ENCODE measurements at regions of chr12 and their contacts with region 1.

Region 1: GRCh38 chr12:62785941-62786559 is 148.9 kb downstream of the PPM1H start:
- DNase-seq: peak; percentile 94
- H3K4me3 ChIP-seq: no peak overlapping the region
- H3K27ac ChIP-seq: peak overlapping the region; percentile 50
- H3K4me1 ChIP-seq: peaks cover 21% of the 10 kb centered on the region
- H3K27me3 ChIP-seq: no peaks in the 10 kb centered on the region
- CTCF ChIP-seq: no peak

Region 2: GRCh38 chr12:62631471-62632410 is 154.3 kb before region 1 on chr12:
- CTCF ChIA-PET with region 1: no interaction called
- dilution Hi-C with region 1: no loop called
- in situ Hi-C with region 1: no loop called
- intact Hi-C with region 1: loop called (anchors 2 kb)
- DNase-seq: peak; percentile 44
- H3K4me3 ChIP-seq: peak overlapping the region; percentile 14 to 51 (median 45)
- H3K27ac ChIP-seq: no peak overlapping the region
- H3K4me1 ChIP-seq: peaks cover 30% of the 10 kb centered on the region
- H3K27me3 ChIP-seq: no peaks in the 10 kb centered on the region
- CTCF ChIP-seq: peak in 1 of 2 donors; percentile 67

Region 3: GRCh38 chr12:62709311-62709710 is 76.7 kb before region 1 on chr12:
- CTCF ChIA-PET with region 1: no interaction called
- dilution Hi-C with region 1: loop called (anchors 5 kb)
- in situ Hi-C with region 1: no loop called
- intact Hi-C with region 1: no loop called
- DNase-seq: no peak
- H3K4me3 ChIP-seq: no peak overlapping the region
- H3K27ac ChIP-seq: no peak overlapping the region
- H3K4me1 ChIP-seq: peaks cover 5% of the 10 kb centered on the region
- H3K27me3 ChIP-seq: no peaks in the 10 kb centered on the region
- CTCF ChIP-seq: no peak

Region 4: DNA sequence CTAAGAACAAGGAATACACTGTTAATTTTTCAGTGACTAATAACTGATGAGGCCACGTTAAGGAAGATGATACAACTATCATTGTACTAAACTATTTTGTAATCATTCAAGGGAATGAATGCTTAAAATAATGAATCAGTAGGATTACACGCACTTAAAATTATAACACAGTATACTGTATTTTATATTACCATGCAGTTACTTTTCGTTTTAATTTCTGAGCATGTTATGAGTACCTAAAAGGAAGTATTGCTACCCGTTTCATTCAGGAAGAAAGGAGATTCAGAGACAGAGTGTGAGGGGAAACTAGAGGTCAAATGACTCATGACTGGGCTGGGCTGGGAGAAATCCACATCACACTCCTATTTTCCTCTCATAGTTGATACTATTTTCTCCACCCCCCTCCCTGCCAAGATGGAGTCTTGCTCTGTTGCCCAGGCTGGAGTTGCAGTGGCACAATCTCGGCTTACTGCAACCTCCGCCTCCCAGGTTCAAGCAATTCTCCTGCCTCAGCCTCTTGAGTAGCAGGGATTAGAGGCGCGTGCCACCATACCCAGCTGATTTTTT is 53.1 kb before region 1 on chr12:
- CTCF ChIA-PET with region 1: no interaction called
- dilution Hi-C with region 1: no loop called
- in situ Hi-C with region 1: no loop called
- intact Hi-C with region 1: loop called (anchors 2 kb)
- DNase-seq: peak; percentile 80
- H3K4me3 ChIP-seq: no peak overlapping the region
- H3K27ac ChIP-seq: peak overlapping the region; percentile 98
- H3K4me1 ChIP-seq: peaks cover 46% of the 10 kb centered on the region
- H3K27me3 ChIP-seq: no peaks in the 10 kb centered on the region
- CTCF ChIP-seq: no peak

Measured in mammary epithelial cell (primary cell).